ENCODE measurements at regions of chr10 and their contacts with region 1.

Region 1: GRCh38 chr10:26334932-26335573 is 103.1 kb upstream of the APBB1IP start:
- DNase-seq: peak; percentile 68
- H3K4me3 Mint-ChIP-seq: peak overlapping the region; percentile 69
- H3K27ac Mint-ChIP-seq: peak overlapping the region; percentile 61
- H3K4me1 Mint-ChIP-seq: peaks cover 10% of the 10 kb centered on the region
- H3K27me3 Mint-ChIP-seq: peaks cover 5% of the 10 kb centered on the region

Region 2: DNA sequence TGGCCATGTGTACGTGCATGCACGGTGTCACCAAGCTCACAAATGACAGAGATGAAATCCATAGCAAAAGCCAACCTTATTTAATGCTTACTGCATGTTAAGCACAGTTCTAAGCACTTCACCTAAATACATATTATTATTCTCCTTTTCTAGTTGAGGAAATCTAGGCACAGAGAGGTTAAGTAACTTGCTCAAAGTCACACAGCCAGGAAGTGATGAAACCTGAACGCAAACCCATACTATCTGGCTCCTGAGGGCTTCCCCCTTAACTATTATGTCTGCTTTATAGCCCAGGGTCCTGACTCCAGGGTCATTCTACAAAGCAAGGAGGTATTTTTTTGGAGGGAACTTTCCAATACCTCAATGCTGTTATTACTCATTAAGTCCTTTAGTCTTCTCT is 56.8 kb before region 1 on chr10:
- CTCF ChIA-PET with region 1: no interaction called
- POLR2A ChIA-PET with region 1: no interaction called
- DNase-seq: no peak
- H3K4me3 Mint-ChIP-seq: no peak overlapping the region
- H3K27ac Mint-ChIP-seq: no peak overlapping the region
- H3K4me1 Mint-ChIP-seq: no peaks in the 10 kb centered on the region
- H3K27me3 Mint-ChIP-seq: no peaks in the 10 kb centered on the region

Region 3: GRCh38 chr10:26300001-26300400 is 35.1 kb before region 1 on chr10:
- CTCF ChIA-PET with region 1: no interaction called
- POLR2A ChIA-PET with region 1: no interaction called
- DNase-seq: no peak
- H3K4me3 Mint-ChIP-seq: no peak overlapping the region
- H3K27ac Mint-ChIP-seq: no peak overlapping the region
- H3K4me1 Mint-ChIP-seq: no peaks in the 10 kb centered on the region
- H3K27me3 Mint-ChIP-seq: peaks cover 3% of the 10 kb centered on the region

Region 4: DNA sequence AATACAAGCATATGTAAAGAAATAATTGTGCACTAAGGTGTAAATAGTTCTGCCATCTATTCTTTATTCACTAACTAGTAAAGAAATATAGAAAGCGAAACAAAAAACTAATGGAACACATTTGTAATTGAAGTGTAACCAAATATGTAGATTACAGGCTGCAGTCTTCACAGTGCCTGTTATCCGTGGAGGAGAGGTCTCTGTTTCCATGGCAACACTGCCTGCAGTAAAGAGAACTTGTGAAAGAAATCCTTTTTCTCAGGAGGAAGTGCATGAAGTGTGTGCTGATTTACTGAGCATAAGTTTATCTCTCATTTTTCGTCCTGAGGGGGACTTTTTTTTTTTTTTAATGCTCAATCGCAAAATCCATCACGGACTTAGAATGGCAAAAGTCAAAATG is 205.5 kb after region 1 on chr10:
- CTCF ChIA-PET with region 1: no interaction called
- POLR2A ChIA-PET with region 1: no interaction called
- DNase-seq: no peak
- H3K4me3 Mint-ChIP-seq: no peak overlapping the region
- H3K27ac Mint-ChIP-seq: no peak overlapping the region
- H3K4me1 Mint-ChIP-seq: peaks cover 26% of the 10 kb centered on the region
- H3K27me3 Mint-ChIP-seq: no peaks in the 10 kb centered on the region

Region 5: GRCh38 chr10:26556748-26557640 is 221.9 kb after region 1 on chr10:
- CTCF ChIA-PET with region 1: interaction called, 58 read pairs
- POLR2A ChIA-PET with region 1: interaction called, 3 read pairs
- DNase-seq: peak; percentile 36
- H3K4me3 Mint-ChIP-seq: no peak overlapping the region
- H3K27ac Mint-ChIP-seq: no peak overlapping the region
- H3K4me1 Mint-ChIP-seq: no peaks in the 10 kb centered on the region
- H3K27me3 Mint-ChIP-seq: no peaks in the 10 kb centered on the region

Region 6: GRCh38 chr10:26665080-26666048 is 330.3 kb after region 1 on chr10:
- CTCF ChIA-PET with region 1: no interaction called
- POLR2A ChIA-PET with region 1: no interaction called
- DNase-seq: no peak
- H3K4me3 Mint-ChIP-seq: no peak overlapping the region
- H3K27ac Mint-ChIP-seq: no peak overlapping the region
- H3K4me1 Mint-ChIP-seq: no peaks in the 10 kb centered on the region
- H3K27me3 Mint-ChIP-seq: peaks cover 7% of the 10 kb centered on the region

Region 7: GRCh38 chr10:26881600-26882331 is 546.7 kb after region 1 on chr10:
- CTCF ChIA-PET with region 1: interaction called, 20 read pairs
- POLR2A ChIA-PET with region 1: no interaction called
- DNase-seq: no peak
- H3K4me3 Mint-ChIP-seq: no peak overlapping the region
- H3K27ac Mint-ChIP-seq: no peak overlapping the region
- H3K4me1 Mint-ChIP-seq: peaks cover 7% of the 10 kb centered on the region
- H3K27me3 Mint-ChIP-seq: peaks cover 30% of the 10 kb centered on the region